Activated naive CD8-positive, alpha-beta T cell treated with anti-CD3 and anti-CD28 coated beads, Interleukin-2, amount 10 ng/mL, durations not matched to agents 7 days and 5 days (primary cell): ENCODE measurements at regions of chr5 and their contacts with region 1.

Region 1: GRCh38 chr5:126449751-126450271 is 26.6 kb downstream of the GRAMD2B start:
- DNase-seq: peak; percentile 43
- ATAC-seq: peak; percentile 97
- H3K4me3 Mint-ChIP-seq: peak overlapping the region; percentile 77
- H3K27ac Mint-ChIP-seq: peak overlapping the region; percentile 100
- H3K4me1 Mint-ChIP-seq: peaks cover 41% of the 10 kb centered on the region
- H3K27me3 Mint-ChIP-seq: no peaks in the 10 kb centered on the region

Region 2: DNA sequence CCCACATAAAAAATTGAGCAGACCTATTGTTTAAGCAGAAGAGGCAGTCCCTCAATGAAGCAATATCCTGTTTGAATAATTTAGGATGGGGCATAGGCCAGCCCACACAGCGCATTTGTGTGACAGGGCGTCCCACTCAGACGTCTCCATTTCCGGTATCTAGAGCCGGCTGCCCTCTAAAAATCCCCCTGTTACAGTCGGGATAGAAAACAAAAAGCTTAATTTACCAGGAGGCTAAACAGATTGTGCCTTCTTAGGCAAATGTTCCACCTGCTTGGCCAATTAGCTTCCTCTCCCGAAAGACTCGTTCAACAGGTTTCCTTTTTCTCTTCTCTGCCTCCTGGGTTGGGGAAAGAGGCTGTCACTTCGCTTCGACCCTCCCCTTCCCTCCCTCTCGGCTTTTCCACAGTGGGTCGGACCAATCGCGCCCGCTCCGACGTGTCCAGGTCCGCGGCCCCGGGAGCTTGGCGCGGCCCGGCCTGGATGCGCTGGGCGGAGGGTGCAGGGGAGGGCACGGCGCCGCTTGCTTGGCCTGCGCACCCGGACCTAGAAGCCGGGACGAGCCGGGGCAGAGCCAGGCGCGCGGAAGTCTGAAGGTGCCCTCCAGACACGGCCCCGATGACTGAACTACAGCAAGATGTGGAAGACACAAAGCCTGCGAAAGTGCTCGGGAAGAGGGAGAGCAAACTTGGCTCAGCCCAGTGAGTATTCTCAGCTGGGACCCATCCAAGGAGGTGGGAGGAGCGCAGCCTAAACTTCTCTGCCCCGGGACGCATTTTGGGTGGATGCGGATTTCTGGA is 26.6 kb before region 1 on chr5 and contains the start of gene GRAMD2B:
- POLR2A ChIA-PET with region 1: interaction called, 29 read pairs
- DNase-seq: peak; percentile 70
- ATAC-seq: peak; percentile 95
- H3K4me3 Mint-ChIP-seq: peak within 1 kb of the TSS; percentile 92
- H3K27ac Mint-ChIP-seq: peak within 1 kb of the TSS; percentile 82
- H3K4me1 Mint-ChIP-seq: peaks cover 23% of the 10 kb centered on the region
- H3K27me3 Mint-ChIP-seq: no peaks in the 10 kb centered on the region
- total RNA-seq, gene GRAMD2B: 4.6 to 5.2 TPM